Left lung (tissue), 14 donors: ENCODE measurements at regions of chr2 and their contacts with region 1.

Region 1: GRCh38 chr2:160406591-160407392 is 86.8 kb downstream of the RBMS1 start:
- DNase-seq: peak; percentile 45 to 92 (median 67)
- ATAC-seq: peak; percentile 69
- H3K4me3 ChIP-seq: peak overlapping the region; percentile 71 to 90
- H3K27ac ChIP-seq: peak overlapping the region; percentile 96 to 100
- H3K4me1 ChIP-seq: peaks cover 33 to 79% of the 10 kb centered on the region in 2 donors
- H3K27me3 ChIP-seq: no peaks in the 10 kb centered on the region
- CTCF ChIP-seq: no peak

Region 2: DNA sequence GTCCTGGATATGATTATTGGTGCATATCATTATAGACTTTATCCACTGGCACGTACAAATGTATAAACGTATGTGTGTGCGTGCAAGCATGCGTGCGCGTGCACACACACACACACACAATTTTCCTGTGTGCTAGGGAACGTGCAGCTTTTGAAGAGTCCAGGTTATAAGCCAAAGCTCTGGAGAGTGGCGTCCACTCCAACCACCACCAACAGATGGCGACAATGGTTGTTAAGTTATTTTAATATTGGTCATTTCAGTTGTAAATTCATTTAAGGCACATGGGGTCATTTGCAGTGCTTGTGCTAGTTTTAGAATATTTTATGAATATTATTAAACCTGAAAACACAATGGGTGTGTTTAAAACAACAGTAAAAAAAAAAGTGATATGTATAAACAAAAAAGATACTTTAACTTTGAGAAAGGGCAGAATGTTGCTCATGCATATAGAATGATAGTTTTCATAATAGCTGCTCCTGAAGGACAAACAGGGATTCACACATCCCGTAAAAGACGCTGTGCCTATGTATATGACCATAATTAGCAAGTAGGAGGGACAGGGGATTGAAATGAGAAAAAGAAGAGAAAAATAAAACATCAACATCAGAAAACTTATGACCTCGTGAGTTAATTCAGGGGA is 82.5 kb before region 1 on chr2:
- intact Hi-C with region 1: loop called in 1 of 2 experiments (anchors 10 kb)
- DNase-seq: peak in 2 of 4 donors; percentile 31 to 61
- ATAC-seq: peak; percentile 61
- H3K4me3 ChIP-seq: no peak overlapping the region
- H3K27ac ChIP-seq: no peak overlapping the region
- H3K4me1 ChIP-seq: peaks cover 12 to 98% of the 10 kb centered on the region in 2 donors
- H3K27me3 ChIP-seq: no peaks in the 10 kb centered on the region
- CTCF ChIP-seq: peak; percentile 66 to 70